Left cardiac atrium (tissue), 4 donors: ENCODE measurements at regions of chr12 and their contacts with region 1.

Region 1: DNA sequence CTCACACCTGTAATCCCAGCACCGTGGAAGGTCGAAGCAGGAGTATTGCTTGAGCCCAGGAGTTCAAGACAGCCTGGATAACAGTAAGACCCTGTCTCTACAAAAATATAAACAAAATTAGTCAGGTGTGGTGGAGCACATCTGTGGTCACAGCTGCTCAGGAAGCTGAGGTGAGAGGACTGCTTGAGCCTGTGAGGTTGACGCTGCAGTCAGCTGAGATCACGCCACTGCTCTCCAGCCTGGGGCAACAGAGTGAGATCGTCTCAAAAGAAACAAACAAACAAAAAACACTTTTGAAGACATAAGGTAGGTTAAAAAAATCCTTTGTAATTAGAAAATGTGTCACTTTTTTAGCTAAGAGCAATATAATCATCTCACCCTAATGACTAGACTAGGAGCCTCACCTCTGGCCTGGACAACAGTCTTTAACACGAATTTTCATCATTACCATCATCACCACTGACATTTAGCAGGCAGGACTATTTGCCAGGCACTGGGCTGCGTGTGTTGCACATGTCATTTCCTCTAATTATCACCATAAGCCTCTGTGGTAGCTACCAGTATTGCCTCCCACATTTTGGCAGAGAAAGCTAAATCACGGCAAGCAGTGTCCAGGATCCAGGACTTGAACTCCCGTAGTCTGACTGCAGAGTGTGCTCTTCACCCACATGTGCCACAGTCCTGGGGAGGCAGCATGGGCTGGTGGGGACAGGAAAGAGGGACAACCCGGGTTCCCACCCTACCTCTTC is 4.6 kb upstream of the SYCP3 start:
- DNase-seq: no peak
- ATAC-seq: peak in 1 of 2 donors; percentile 20

Region 2: DNA sequence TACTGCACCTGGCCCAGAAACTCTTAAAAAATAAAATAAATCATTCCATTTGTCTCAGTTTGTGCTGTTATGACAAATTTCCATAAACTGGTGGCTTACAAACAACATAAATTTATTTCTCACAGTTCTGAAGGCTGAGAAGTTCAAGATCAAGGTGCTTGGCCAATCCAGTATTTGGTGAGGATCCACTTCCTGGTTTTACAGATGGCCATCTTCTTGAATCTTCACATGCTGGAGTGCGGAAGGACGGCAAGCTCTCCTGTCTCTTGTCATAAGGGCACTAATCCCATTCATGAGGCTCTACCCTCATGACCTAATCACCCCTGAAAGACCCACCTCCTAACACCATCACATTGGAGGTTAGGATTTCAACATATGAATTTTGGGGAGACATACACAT is 179.0 kb before region 1 on chr12:
- intact Hi-C with region 1: loop called in 1 of 2 experiments (anchors 10 kb)
- DNase-seq: no peak
- ATAC-seq: no peak